CD8-positive, alpha-beta T cell (primary cell): ENCODE measurements at regions of chr17 and their contacts with region 1.

Region 1: DNA sequence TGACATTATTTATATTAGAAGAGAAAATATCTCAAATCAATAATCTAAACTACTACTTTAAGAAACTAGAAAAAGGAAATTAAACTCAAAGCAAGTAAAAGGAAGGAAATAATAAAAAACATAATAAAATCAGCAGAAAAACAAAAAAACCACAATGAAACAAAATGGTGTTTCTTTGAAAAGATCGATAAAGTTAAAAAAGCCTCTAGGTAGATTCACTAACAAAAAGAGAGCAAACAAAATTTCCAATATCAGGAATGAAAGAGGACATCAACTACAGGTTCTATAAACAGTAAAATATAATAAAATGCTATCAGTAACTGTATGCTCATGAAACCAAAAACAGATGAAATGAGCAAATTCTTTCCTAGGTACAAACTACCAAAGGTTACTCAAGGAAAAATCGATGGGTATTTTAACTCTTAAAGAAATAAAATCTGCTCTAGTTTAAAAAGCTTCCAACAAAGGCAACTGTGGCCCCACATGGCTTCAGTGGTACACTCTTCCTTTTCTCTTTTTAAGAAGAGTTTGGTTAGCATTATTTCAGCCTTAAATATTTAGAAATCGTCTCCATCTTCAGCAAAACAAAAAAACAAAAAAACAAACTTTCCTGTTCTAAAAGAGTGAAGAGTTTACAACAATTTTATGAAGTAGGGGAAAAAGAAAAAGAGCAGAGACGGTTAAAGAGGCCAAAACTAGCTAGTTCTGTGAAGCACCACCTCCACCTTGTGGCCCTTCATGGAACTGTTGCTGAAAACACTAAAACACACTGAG is 102.2 kb downstream of the TRIM37 start:
- DNase-seq: peak; percentile 52 to 82 (median 74)
- ATAC-seq: peak; percentile 54
- H3K4me3 ChIP-seq: no peak overlapping the region
- H3K4me3 Mint-ChIP-seq: no peak overlapping the region
- H3K27ac ChIP-seq: peak overlapping the region in 1 of 2 experiments; percentile 40
- H3K27ac Mint-ChIP-seq: peak overlapping the region; percentile 60
- H3K4me1 ChIP-seq: peaks cover 15% of the 10 kb centered on the region
- H3K4me1 Mint-ChIP-seq: peaks cover 13% of the 10 kb centered on the region
- H3K27me3 ChIP-seq: no peaks in the 10 kb centered on the region
- H3K27me3 Mint-ChIP-seq: no peaks in the 10 kb centered on the region
- CTCF ChIP-seq: peak; percentile 98

Region 2: GRCh38 chr17:58577642-58578091 is 426.9 kb before region 1 on chr17:
- CTCF ChIA-PET with region 1: interaction called, 6 read pairs
- POLR2A ChIA-PET with region 1: no interaction called
- intact Hi-C with region 1: loop called in 1 of 2 experiments (anchors 2 kb)
- DNase-seq: peak in 8 of 9 experiments; percentile 11 to 68 (median 52)
- ATAC-seq: peak; percentile 55
- H3K4me3 ChIP-seq: no peak overlapping the region
- H3K4me3 Mint-ChIP-seq: no peak overlapping the region
- H3K27ac ChIP-seq: no peak overlapping the region
- H3K27ac Mint-ChIP-seq: no peak overlapping the region
- H3K4me1 ChIP-seq: no peaks in the 10 kb centered on the region
- H3K4me1 Mint-ChIP-seq: peaks cover 3% of the 10 kb centered on the region
- H3K27me3 ChIP-seq: no peaks in the 10 kb centered on the region
- H3K27me3 Mint-ChIP-seq: peaks cover 2% of the 10 kb centered on the region
- CTCF ChIP-seq: peak; percentile 65

Region 3: GRCh38 chr17:58985971-58986370 is 18.6 kb before region 1 on chr17:
- CTCF ChIA-PET with region 1: no interaction called
- POLR2A ChIA-PET with region 1: no interaction called
- intact Hi-C with region 1: no loop called
- DNase-seq: no peak
- ATAC-seq: no peak
- H3K4me3 ChIP-seq: no peak overlapping the region
- H3K4me3 Mint-ChIP-seq: no peak overlapping the region
- H3K27ac ChIP-seq: no peak overlapping the region
- H3K27ac Mint-ChIP-seq: no peak overlapping the region
- H3K4me1 ChIP-seq: no peaks in the 10 kb centered on the region
- H3K4me1 Mint-ChIP-seq: no peaks in the 10 kb centered on the region
- H3K27me3 ChIP-seq: no peaks in the 10 kb centered on the region
- H3K27me3 Mint-ChIP-seq: no peaks in the 10 kb centered on the region
- CTCF ChIP-seq: no peak